ENCODE measurements at regions of chr3 and their contacts with region 1.

Region 1: GRCh38 chr3:111956995-111957734 is 21.7 kb upstream of the ABHD10 start:
- DNase-seq: peak; percentile 62
- H3K4me3 ChIP-seq: no peak overlapping the region
- H3K27ac ChIP-seq: no peak overlapping the region
- H3K4me1 ChIP-seq: no peaks in the 10 kb centered on the region
- H3K27me3 ChIP-seq: no peaks in the 10 kb centered on the region
- CTCF ChIP-seq: no peak

Region 2: GRCh38 chr3:111910806-111911205 is 46.4 kb before region 1 on chr3:
- CTCF ChIA-PET with region 1: no interaction called
- dilution Hi-C with region 1: loop called (anchors 5 kb)
- in situ Hi-C with region 1: no loop called
- intact Hi-C with region 1: no loop called
- DNase-seq: no peak
- H3K4me3 ChIP-seq: no peak overlapping the region
- H3K27ac ChIP-seq: peak overlapping the region; percentile 37
- H3K4me1 ChIP-seq: peaks cover 25% of the 10 kb centered on the region
- H3K27me3 ChIP-seq: no peaks in the 10 kb centered on the region
- CTCF ChIP-seq: no peak

Region 3: GRCh38 chr3:112097378-112097777 is 140.2 kb after region 1 on chr3:
- CTCF ChIA-PET with region 1: no interaction called
- dilution Hi-C with region 1: no loop called
- in situ Hi-C with region 1: no loop called
- intact Hi-C with region 1: no loop called
- DNase-seq: peak; percentile 99
- H3K4me3 ChIP-seq: no peak overlapping the region
- H3K27ac ChIP-seq: peak overlapping the region; percentile 70
- H3K4me1 ChIP-seq: peaks cover 37% of the 10 kb centered on the region
- H3K27me3 ChIP-seq: no peaks in the 10 kb centered on the region
- CTCF ChIP-seq: no peak

Measured in mammary epithelial cell (primary cell).